Activated CD4-positive, alpha-beta memory T cell treated with anti-CD3 and anti-CD28 coated beads for 36 hours (primary cell): ENCODE measurements at regions of chr12 and their contacts with region 1.

Region 1: DNA sequence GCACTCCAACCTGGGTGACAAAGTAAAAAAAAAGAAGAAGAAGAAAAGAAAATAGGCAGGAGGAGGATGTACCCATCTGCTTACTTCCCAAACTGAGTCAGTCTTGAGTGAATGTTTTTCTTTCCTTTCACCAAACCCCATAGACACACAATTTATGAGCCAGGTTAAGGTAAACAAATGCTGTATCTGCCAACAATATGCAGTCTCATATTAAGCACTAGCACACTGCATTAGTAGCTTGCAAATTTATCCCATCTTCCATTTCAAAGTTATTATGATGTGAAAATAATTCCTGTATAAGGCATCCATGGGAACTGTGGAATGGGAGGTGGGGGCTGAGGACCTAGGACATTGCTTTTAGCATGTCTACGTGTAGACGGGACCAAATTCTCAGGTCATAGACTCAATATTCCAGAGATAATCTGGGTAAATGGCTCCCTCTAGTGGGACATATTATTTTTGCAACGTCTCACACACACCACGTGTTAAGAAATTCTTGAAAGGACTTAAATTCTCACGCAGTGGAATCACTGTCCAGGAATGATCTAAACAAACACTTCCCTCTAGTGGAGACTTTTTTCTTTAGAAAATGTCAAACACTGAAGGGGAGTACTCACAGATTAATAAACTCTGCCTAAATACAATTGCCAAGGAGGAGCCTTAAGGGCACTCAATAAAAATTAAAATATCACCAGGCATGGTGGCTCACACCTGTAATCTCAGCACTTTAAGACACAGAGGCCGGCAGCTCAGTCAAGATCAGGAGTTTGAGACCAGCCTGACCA is 17.1 kb upstream of the OR10P1 start:
- DNase-seq: no peak
- H3K4me3 Mint-ChIP-seq: no peak overlapping the region
- H3K27ac Mint-ChIP-seq: no peak overlapping the region
- H3K4me1 Mint-ChIP-seq: peaks cover 9% of the 10 kb centered on the region
- H3K27me3 Mint-ChIP-seq: peaks cover 29% of the 10 kb centered on the region

Region 2: DNA sequence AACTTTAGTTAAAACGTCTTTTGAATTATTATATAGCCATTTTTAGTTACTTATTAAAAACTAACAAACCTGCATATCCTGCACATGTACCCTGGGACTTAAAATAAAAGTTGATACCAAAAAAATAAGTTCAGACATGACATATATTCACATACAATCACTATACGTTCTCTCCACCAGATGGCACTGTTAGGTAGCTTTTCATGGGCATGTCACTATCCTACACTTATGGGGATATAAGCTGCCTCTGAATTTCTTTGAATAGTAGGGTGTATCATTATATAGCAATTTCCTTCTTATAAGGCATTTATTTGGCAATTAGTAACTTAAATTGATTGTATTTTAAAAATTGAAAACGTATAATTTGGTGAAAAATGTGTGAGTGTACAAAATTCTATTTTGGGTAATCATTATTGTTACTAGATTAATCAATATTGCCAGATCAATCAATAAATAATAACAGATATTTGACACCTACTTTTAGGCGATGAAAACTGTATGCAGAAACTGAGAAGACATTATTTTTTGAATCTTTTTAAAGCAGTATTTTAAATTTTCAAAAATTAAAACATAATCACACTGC is 430.5 kb before region 1 on chr12:
- CTCF ChIA-PET with region 1: interaction called, 25 read pairs
- POLR2A ChIA-PET with region 1: no interaction called
- intact Hi-C with region 1: loop called (anchors 1 kb)
- DNase-seq: no peak
- H3K4me3 Mint-ChIP-seq: no peak overlapping the region
- H3K27ac Mint-ChIP-seq: no peak overlapping the region
- H3K4me1 Mint-ChIP-seq: no peaks in the 10 kb centered on the region
- H3K27me3 Mint-ChIP-seq: peaks cover 18% of the 10 kb centered on the region

Region 3: DNA sequence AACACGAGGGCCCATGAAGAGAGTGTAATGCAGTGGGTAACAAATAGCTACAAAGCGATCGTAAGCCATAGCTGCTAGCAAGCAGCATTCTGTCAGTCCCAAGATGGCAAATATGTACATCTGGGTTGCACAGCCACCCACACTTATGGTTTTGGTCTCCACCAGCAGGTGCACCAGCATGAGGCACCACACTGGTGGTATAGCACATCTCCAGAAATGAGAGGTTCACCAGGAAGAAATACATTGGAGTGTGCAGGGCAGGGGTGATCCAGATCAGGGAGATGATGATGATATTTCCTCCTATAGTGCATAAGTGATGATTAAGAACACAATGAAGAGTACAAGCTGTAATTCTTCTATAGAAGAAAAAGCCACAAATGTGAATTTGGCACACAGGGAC is 425.2 kb before region 1 on chr12:
- CTCF ChIA-PET with region 1: interaction called, 25 read pairs
- POLR2A ChIA-PET with region 1: no interaction called
- intact Hi-C with region 1: loop called (anchors 1 kb)
- DNase-seq: no peak
- H3K4me3 Mint-ChIP-seq: no peak overlapping the region
- H3K27ac Mint-ChIP-seq: no peak overlapping the region
- H3K4me1 Mint-ChIP-seq: no peaks in the 10 kb centered on the region
- H3K27me3 Mint-ChIP-seq: peaks cover 36% of the 10 kb centered on the region